Activated CD4-positive, alpha-beta memory T cell treated with anti-CD3 and anti-CD28 coated beads, Interleukin-2, amount 10 ng/mL, durations not matched to agents 7 days and 5 days (primary cell): ENCODE measurements at regions of chr17 and their contacts with region 1.

Region 1: DNA sequence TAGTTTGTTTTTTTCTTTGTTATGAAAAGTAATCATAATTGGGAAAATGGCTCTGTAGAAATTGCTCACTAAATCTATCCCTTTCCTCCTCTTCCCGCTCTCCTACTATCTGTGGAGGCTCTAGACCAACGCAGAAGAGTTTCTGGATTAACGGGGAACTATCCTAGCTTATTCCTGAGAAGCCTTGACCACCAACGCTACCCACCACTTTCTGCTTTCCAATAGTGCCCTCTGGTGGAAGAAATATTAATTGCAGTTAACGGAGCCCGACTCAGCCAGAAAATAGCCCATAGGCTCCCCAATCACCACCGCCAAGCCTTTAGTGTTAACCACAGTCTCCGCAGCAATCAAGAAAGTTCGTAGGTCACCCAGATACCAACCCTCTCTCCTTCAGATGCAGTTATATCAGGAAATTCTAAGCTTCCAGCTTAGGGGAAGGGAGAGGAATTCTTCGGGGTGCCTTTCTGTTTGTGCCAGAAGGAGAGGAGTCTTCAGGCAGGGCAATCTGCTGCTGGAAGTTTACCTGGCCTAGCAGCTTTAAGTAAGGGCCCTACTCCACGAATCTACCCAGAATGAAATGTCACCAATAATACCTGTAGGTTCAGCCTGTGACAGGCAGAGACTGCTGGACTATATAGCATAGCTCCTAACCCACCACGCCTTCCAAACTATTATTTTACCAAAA is 23.0 kb upstream of the NSRP1 start:
- DNase-seq: peak; percentile 45
- H3K4me3 Mint-ChIP-seq: no peak overlapping the region
- H3K27ac Mint-ChIP-seq: no peak overlapping the region
- H3K4me1 Mint-ChIP-seq: peaks cover 7% of the 10 kb centered on the region
- H3K27me3 Mint-ChIP-seq: peaks cover 52% of the 10 kb centered on the region

Region 2: GRCh38 chr17:29807520-29808351 is 285.9 kb before region 1 on chr17:
- CTCF ChIA-PET with region 1: interaction called, 10 read pairs
- POLR2A ChIA-PET with region 1: no interaction called
- DNase-seq: peak; percentile 72
- H3K4me3 Mint-ChIP-seq: no peak overlapping the region
- H3K27ac Mint-ChIP-seq: no peak overlapping the region
- H3K4me1 Mint-ChIP-seq: peaks cover 19% of the 10 kb centered on the region
- H3K27me3 Mint-ChIP-seq: no peaks in the 10 kb centered on the region

Region 3: DNA sequence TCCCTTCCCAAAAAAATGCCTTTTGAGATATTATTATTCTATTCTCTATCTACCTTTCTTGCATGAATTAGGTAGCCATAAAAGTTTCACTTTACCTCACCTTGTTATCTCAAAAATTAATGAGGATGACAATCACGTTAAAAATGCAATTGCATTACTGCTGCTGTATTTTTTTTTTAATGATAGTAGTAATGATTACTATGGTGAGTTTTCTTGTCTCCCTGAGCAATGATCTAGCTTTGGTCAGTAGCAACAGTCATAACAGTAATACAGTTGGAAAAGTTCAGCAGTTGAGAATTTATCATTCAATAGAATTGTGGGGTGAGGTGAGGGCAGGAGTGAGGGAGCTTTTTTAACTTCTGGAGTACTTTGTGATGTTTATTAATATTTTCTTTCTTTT is 152.3 kb before region 1 on chr17 and contains the start of gene EFCAB5:
- CTCF ChIA-PET with region 1: no interaction called
- POLR2A ChIA-PET with region 1: no interaction called
- DNase-seq: no peak
- H3K4me3 Mint-ChIP-seq: no peak within 1 kb of the TSS
- H3K27ac Mint-ChIP-seq: no peak within 1 kb of the TSS
- H3K4me1 Mint-ChIP-seq: peaks cover 10% of the 10 kb centered on the region
- H3K27me3 Mint-ChIP-seq: peaks cover 1% of the 10 kb centered on the region
- total RNA-seq, gene EFCAB5: 0.86 to 1.6 TPM

Region 4: DNA sequence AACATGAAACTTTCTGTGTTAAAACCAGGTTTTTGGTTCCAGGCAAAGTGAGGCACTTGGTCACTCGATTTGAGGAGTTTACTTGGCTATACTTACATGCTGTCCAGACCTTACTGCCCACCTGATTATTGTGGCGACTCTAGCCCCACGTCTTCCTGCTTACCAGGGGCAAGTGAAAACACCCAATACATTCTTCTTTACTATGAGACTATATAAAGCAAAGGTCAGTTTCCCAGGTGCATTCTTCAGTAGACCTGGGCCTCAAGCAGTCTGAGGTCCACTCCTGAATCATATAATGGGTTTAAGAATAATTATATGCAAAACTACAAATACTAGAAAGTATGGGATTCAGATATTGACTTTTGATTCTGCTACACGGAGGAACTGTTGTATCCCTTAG is 65.9 kb before region 1 on chr17:
- CTCF ChIA-PET with region 1: interaction called, 16 read pairs
- POLR2A ChIA-PET with region 1: no interaction called
- DNase-seq: no peak
- H3K4me3 Mint-ChIP-seq: no peak overlapping the region
- H3K27ac Mint-ChIP-seq: no peak overlapping the region
- H3K4me1 Mint-ChIP-seq: no peaks in the 10 kb centered on the region
- H3K27me3 Mint-ChIP-seq: peaks cover 7% of the 10 kb centered on the region

Region 5: GRCh38 chr17:30062372-30062771 is 31.2 kb before region 1 on chr17:
- CTCF ChIA-PET with region 1: no interaction called
- POLR2A ChIA-PET with region 1: no interaction called
- DNase-seq: no peak
- H3K4me3 Mint-ChIP-seq: no peak overlapping the region
- H3K27ac Mint-ChIP-seq: no peak overlapping the region
- H3K4me1 Mint-ChIP-seq: no peaks in the 10 kb centered on the region
- H3K27me3 Mint-ChIP-seq: peaks cover 35% of the 10 kb centered on the region